ENCODE measurements at regions of chr5 and their contacts with region 1.

Region 1: DNA sequence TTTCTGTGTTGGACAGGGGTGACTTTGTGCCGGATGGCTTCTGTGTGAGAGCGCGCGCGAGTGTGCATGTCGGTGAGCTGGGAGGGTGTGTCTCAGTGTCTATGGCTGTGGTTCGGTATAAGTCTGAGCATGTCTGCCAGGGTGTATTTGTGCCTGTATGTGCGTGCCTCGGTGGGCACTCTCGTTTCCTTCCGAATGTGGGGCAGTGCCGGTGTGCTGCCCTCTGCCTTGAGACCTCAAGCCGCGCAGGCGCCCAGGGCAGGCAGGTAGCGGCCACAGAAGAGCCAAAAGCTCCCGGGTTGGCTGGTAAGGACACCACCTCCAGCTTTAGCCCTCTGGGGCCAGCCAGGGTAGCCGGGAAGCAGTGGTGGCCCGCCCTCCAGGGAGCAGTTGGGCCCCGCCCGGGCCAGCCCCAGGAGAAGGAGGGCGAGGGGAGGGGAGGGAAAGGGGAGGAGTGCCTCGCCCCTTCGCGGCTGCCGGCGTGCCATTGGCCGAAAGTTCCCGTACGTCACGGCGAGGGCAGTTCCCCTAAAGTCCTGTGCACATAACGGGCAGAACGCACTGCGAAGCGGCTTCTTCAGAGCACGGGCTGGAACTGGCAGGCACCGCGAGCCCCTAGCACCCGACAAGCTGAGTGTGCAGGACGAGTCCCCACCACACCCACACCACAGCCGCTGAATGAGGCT is at the start of gene ADRB2:
- DNase-seq: peak; percentile 96 to 99
- H3K4me3 ChIP-seq: peak within 1 kb of the TSS; percentile 51
- CTCF ChIP-seq: no peak
- POLR2A ChIP-seq: peak in 1 of 2 donors; percentile 85
- total RNA-seq, gene ADRB2: 31.4 to 90.3 (median 42.9) TPM

Region 2: GRCh38 chr5:148972958-148973357 is 146.8 kb after region 1 on chr5:
- intact Hi-C with region 1: loop called (anchors 10 kb)
- DNase-seq: peak in 1 of 2 donors; percentile 77
- H3K4me3 ChIP-seq: no peak overlapping the region
- CTCF ChIP-seq: no peak
- POLR2A ChIP-seq: no peak